ENCODE measurements at regions of chr18 and their contacts with region 1.

Region 1: DNA sequence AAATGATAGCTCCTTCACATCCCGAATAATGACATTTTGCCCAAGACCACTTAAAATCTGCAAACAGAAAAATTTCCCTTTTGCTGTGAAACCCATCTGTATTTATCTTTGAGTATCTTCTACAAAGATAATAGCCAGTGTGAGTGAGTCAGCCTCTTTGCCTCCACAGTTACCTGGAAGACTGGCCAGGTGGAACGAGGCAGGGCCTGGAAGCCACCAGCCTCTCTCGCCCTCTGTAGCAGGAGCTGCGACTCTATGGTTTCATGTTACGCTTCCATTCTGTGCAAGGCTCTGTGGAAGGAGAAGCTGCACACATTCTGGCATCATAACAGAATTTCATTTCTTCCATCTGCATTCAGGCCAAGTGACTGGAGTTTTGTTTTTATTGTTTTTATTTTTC is 9.6 kb downstream of the ELP2 start:
- DNase-seq: no peak
- ATAC-seq: no peak
- H3K4me3 ChIP-seq: no peak overlapping the region
- H3K27ac ChIP-seq: no peak overlapping the region
- H3K4me1 ChIP-seq: no peaks in the 10 kb centered on the region
- H3K27me3 ChIP-seq: no peaks in the 10 kb centered on the region
- CTCF ChIP-seq: no peak
- EP300 ChIP-seq: no peak
- POLR2A ChIP-seq: no peak
- RAD21 ChIP-seq: no peak

Region 2: DNA sequence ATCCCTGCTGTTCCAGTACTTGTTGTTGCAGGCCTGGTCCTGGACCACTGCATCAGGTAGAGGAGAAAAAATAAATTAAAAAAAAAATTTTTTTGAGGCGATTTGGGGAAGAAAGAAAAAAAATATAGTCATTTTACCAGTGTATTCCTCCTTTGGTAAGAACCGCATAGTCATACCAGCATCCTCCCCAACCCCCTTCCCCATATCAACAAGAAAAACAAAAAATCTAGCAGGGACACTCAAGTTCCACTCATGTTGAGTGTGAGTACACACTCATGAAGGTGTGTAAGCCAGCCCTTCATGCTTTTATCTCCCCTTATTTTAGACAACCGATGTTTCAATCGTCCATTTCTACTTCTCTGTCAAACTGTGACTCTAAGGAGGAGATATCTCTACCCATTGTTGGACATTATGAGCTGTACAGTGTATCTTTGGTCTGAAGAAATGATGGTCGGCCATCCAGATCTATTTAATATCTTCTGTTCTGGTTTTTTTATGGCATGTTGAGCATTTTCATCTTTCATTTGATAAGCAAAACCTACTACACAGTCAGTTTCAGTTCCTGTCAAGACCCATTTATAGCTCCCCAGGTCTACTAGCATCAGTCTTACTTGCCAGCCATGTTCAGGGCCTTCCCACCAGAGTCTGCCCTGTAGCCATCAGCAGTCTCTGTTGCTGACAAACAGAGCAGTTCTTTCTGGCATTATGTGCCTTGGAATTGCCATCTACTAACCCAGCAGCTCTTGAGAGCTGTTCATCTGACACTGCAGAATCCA is 10.5 kb after region 1 on chr18:
- CTCF ChIA-PET with region 1: interaction called, 4 read pairs
- POLR2A ChIA-PET with region 1: interaction called, 4 read pairs
- RAD21 ChIA-PET with region 1: interaction called, 4 read pairs
- SMC1A ChIA-PET with region 1: interaction called, 12 read pairs
- in situ Hi-C with region 1: no loop called
- intact Hi-C with region 1: no loop called
- DNase-seq: peak; percentile 32
- ATAC-seq: peak; percentile 97
- H3K4me3 ChIP-seq: peak overlapping the region; percentile 3; the same call in 1 of the 2 replicates
- H3K27ac ChIP-seq: peak overlapping the region; percentile 79
- H3K4me1 ChIP-seq: peaks cover 18% of the 10 kb centered on the region
- H3K27me3 ChIP-seq: no peaks in the 10 kb centered on the region
- CTCF ChIP-seq: no peak
- EP300 ChIP-seq: 0 out of 4 replicates have a peak, but pooled peaks of 1 of the 2 experiments have one; percentile 31
- POLR2A ChIP-seq: no peak
- RAD21 ChIP-seq: no peak

Region 3: DNA sequence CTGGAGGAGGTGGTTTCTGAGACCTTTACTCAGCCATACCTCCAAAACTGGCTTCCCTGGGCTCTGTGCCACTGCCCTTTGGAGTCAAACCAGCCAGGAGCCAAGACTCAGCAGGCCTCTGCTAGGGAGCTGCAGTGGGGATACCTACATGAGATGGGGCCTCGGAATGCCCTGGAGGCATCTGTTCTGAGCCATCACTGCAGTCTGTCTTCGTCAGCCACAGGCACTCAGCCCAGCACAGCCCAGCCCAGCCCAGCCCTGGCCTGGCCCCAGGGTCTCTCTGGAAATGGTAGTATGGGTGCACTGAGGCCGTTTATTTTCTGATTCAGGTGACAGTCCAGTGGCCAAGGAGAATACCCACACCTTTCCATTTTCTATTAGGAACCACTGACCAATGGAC is 1216.5 kb after region 1 on chr18:
- CTCF ChIA-PET with region 1: no interaction called
- POLR2A ChIA-PET with region 1: no interaction called
- RAD21 ChIA-PET with region 1: no interaction called
- SMC1A ChIA-PET with region 1: no interaction called
- in situ Hi-C with region 1: no loop called
- intact Hi-C with region 1: no loop called
- DNase-seq: no peak
- ATAC-seq: no peak
- H3K4me3 ChIP-seq: no peak overlapping the region
- H3K27ac ChIP-seq: no peak overlapping the region
- H3K4me1 ChIP-seq: no peaks in the 10 kb centered on the region
- H3K27me3 ChIP-seq: peaks cover 0 to 6% of the 10 kb centered on the region in 2 experiments; a peak in 3 of 4 replicates
- CTCF ChIP-seq: no peak
- EP300 ChIP-seq: no peak
- POLR2A ChIP-seq: no peak
- RAD21 ChIP-seq: no peak